ENCODE measurements at regions of chr1 and their contacts with region 1.

Region 1: GRCh38 chr1:55478742-55479141 is 263.6 kb upstream of the USP24 start:
- DNase-seq: peak; percentile 68
- H3K4me3 ChIP-seq: no peak overlapping the region
- H3K27ac ChIP-seq: no peak overlapping the region
- H3K4me1 ChIP-seq: peaks cover 19% of the 10 kb centered on the region
- H3K27me3 ChIP-seq: no peaks in the 10 kb centered on the region
- CTCF ChIP-seq: peak in 1 of 2 donors; percentile 19
- POLR2A ChIP-seq: no peak

Region 2: DNA sequence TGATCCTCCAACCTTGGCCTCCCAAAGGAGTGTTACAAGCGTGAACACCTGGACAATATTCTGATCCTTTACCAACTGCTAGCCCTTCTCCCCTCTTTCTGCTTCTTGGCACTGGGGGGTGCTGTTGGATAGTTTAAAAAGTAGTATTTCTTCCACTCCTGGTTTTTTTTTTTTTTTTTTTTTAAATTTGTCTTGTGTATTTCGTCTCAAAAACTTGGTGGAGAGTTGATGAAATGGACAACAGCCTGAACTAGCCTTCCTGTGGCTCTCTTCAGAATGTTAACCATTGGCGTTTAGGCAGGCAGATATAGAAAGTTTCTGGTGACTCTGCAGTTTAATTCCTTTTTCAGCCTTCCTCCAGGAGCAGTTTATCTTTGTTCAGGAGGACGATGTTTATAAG is 193.9 kb before region 1 on chr1:
- CTCF ChIA-PET with region 1: interaction called, 12 read pairs
- POLR2A ChIA-PET with region 1: no interaction called
- dilution Hi-C with region 1: no loop called
- intact Hi-C with region 1: no loop called
- DNase-seq: peak; percentile 64
- H3K4me3 ChIP-seq: no peak overlapping the region
- H3K27ac ChIP-seq: no peak overlapping the region
- H3K4me1 ChIP-seq: peaks cover 12% of the 10 kb centered on the region
- H3K27me3 ChIP-seq: no peaks in the 10 kb centered on the region
- CTCF ChIP-seq: peak; percentile 56 to 59
- POLR2A ChIP-seq: no peak

Region 3: GRCh38 chr1:55311057-55311641 is 167.6 kb before region 1 on chr1:
- CTCF ChIA-PET with region 1: no interaction called
- POLR2A ChIA-PET with region 1: no interaction called
- dilution Hi-C with region 1: no loop called
- intact Hi-C with region 1: no loop called
- DNase-seq: no peak
- H3K4me3 ChIP-seq: peak overlapping the region in 1 of 3 experiments; percentile 10
- H3K27ac ChIP-seq: peak overlapping the region; percentile 93
- H3K4me1 ChIP-seq: peaks cover 32% of the 10 kb centered on the region
- H3K27me3 ChIP-seq: no peaks in the 10 kb centered on the region
- CTCF ChIP-seq: no peak
- POLR2A ChIP-seq: no peak

Region 4: DNA sequence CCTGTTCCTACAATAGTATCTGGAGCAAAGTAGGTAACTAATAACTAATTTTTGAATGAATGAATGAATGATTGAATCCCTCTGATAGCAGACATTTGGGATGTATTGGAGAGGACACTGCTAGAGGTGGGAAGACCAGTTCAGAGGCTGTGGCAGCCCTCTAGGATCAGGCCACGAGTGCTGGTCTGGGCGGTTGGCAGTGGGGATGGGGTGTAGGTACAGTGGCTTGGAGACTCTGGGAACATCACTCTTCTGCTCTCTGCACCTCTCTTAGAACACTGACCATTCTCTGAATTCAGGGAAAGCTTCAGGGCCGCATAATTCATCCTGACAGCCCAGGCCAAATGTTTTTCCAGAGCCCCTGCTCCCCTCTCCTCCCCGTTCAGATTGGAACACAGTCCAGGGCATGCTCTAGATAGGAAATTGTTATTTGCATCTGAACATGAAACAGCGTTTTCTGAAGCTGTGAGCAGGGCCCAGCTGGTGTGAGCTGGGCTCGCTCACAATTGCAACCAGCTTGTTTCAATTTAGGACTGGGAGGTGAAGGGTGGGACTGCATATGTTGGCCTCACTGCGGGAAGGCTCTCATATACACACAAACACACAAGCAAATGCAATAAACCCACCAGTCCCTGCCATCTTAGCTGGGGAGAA is 10.5 kb before region 1 on chr1:
- CTCF ChIA-PET with region 1: interaction called, 14 read pairs
- POLR2A ChIA-PET with region 1: no interaction called
- dilution Hi-C with region 1: no loop called
- intact Hi-C with region 1: no loop called
- DNase-seq: no peak
- H3K4me3 ChIP-seq: no peak overlapping the region
- H3K27ac ChIP-seq: no peak overlapping the region
- H3K4me1 ChIP-seq: peaks cover 3% of the 10 kb centered on the region
- H3K27me3 ChIP-seq: no peaks in the 10 kb centered on the region
- CTCF ChIP-seq: no peak
- POLR2A ChIP-seq: no peak

Region 5: DNA sequence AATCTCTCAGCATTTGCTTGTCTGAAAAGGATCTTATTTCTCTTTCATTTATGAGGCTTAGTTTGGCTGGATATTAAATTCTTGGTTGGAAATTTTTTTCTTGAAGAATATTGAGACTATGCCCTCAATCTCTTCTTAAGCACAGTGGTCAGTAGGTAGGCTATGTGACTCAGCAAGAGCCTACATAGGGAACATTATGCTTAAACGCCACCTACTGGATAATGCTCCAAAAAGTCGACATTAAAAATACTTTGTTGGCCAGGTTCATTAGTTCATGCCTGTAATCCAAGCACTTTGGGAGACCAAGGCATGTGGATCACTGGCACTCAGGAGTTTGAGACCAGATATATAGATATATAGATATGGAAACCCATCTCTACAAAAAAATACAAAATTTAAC is 414.4 kb after region 1 on chr1:
- CTCF ChIA-PET with region 1: interaction called, 9 read pairs
- POLR2A ChIA-PET with region 1: no interaction called
- dilution Hi-C with region 1: no loop called
- intact Hi-C with region 1: loop called (anchors 1 kb)
- DNase-seq: peak; percentile 56
- H3K4me3 ChIP-seq: no peak overlapping the region
- H3K27ac ChIP-seq: no peak overlapping the region
- H3K4me1 ChIP-seq: no peaks in the 10 kb centered on the region
- H3K27me3 ChIP-seq: no peaks in the 10 kb centered on the region
- CTCF ChIP-seq: peak; percentile 22 to 27
- POLR2A ChIP-seq: no peak

Region 6: GRCh38 chr1:56411484-56412180 is 932.9 kb after region 1 on chr1:
- CTCF ChIA-PET with region 1: interaction called, 4 read pairs
- POLR2A ChIA-PET with region 1: no interaction called
- dilution Hi-C with region 1: no loop called
- intact Hi-C with region 1: loop called (anchors 5 kb)
- DNase-seq: peak; percentile 95
- H3K4me3 ChIP-seq: no peak overlapping the region
- H3K27ac ChIP-seq: peak overlapping the region; percentile 49
- H3K4me1 ChIP-seq: peaks cover 19% of the 10 kb centered on the region
- H3K27me3 ChIP-seq: no peaks in the 10 kb centered on the region
- CTCF ChIP-seq: peak; percentile 38 to 60
- POLR2A ChIP-seq: no peak

Region 7: DNA sequence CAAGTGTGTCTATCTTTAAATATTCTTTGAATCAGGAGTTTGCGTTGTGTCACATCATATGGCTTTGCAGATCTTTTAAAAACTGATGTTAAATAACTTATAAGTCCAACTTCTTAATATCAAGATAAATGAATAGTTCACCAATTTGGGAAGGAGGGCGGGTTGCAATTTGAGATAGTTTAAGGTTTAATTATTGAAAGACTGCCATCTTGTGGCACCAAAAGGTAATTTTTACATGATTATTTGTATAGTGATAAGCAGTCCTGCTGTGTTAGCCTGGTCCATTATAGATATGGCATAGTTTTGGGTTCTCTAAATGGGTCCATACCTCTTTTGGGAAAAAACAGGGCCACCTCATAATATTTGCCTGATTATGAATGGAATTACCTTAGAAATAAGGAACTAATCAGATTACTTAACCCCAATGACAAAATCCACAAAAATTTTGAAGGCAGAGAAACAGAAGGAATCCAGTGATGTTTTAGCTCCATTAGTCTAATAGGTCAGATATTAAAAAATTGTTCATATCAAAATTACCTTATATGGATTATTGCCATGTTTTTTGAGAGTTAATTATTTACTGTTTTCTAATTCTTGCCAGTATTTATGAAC is 1230.6 kb after region 1 on chr1:
- CTCF ChIA-PET with region 1: interaction called, 22 read pairs
- POLR2A ChIA-PET with region 1: no interaction called
- dilution Hi-C with region 1: no loop called
- intact Hi-C with region 1: loop called (anchors 1 kb)
- DNase-seq: peak; percentile 69
- H3K4me3 ChIP-seq: no peak overlapping the region
- H3K27ac ChIP-seq: no peak overlapping the region
- H3K4me1 ChIP-seq: peaks cover 2% of the 10 kb centered on the region
- H3K27me3 ChIP-seq: no peaks in the 10 kb centered on the region
- CTCF ChIP-seq: peak; percentile 32 to 42
- POLR2A ChIP-seq: no peak

Region 8: GRCh38 chr1:56803561-56804156 is 1324.9 kb after region 1 on chr1:
- CTCF ChIA-PET with region 1: interaction called, 10 read pairs
- POLR2A ChIA-PET with region 1: no interaction called
- dilution Hi-C with region 1: no loop called
- intact Hi-C with region 1: no loop called
- DNase-seq: peak; percentile 28
- H3K4me3 ChIP-seq: no peak overlapping the region
- H3K27ac ChIP-seq: no peak overlapping the region
- H3K4me1 ChIP-seq: no peaks in the 10 kb centered on the region
- H3K27me3 ChIP-seq: no peaks in the 10 kb centered on the region
- CTCF ChIP-seq: peak; percentile 46 to 63
- POLR2A ChIP-seq: no peak

Measured in endothelial cell of umbilical vein (primary cell).